ENCODE measurements at regions of chr21 and their contacts with region 1.

Region 1: GRCh38 chr21:39788383-39788782 is 43.4 kb downstream of the IGSF5 start:
- DNase-seq: no peak
- H3K4me3 ChIP-seq: no peak overlapping the region
- H3K27ac ChIP-seq: no peak overlapping the region
- H3K4me1 ChIP-seq: no peaks in the 10 kb centered on the region
- H3K27me3 ChIP-seq: no peaks in the 10 kb centered on the region
- CTCF ChIP-seq: peak; percentile 51 to 79 (median 72)
- POLR2A ChIP-seq: no peak

Region 2: GRCh38 chr21:38520511-38520910 is 1267.9 kb before region 1 on chr21:
- intact Hi-C with region 1: loop called (anchors 5 kb)
- DNase-seq: no peak
- H3K4me3 ChIP-seq: no peak overlapping the region
- H3K27ac ChIP-seq: no peak overlapping the region
- H3K4me1 ChIP-seq: no peaks in the 10 kb centered on the region
- H3K27me3 ChIP-seq: no peaks in the 10 kb centered on the region
- CTCF ChIP-seq: no peak
- POLR2A ChIP-seq: no peak

Region 3: DNA sequence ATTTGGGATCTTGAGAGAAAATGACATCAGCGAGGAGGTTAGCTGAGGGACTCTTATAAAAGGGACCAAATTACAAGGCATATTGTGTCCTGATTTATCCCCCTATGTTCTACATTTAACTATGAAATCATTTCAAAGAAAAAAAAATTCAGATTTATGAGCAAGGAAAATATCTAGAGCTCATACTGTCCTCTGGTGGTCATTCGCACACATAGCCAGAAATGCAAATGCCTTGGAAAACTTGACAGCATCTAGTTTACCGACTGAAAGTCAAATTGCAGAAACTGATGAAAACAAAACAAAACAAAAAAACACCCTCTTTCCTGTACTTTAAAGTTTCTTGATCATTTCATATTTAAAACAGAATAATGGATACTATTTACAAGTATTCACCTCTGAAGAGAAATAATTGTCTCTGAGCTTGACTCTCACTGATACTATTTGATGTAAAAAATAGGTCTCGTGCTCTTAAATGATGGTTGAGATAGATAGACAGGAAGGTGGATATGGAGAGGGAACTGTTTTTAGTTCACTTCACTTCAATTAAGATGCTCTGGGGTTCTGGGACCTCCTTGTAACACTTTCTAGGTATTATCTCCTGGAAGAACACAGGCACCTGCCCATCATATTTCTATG is 332.7 kb after region 1 on chr21:
- intact Hi-C with region 1: loop called (anchors 10 kb)
- DNase-seq: no peak
- H3K4me3 ChIP-seq: no peak overlapping the region
- H3K27ac ChIP-seq: no peak overlapping the region
- H3K4me1 ChIP-seq: no peaks in the 10 kb centered on the region
- H3K27me3 ChIP-seq: no peaks in the 10 kb centered on the region
- CTCF ChIP-seq: peak; percentile 46 to 85 (median 67)
- POLR2A ChIP-seq: no peak

Measured in vagina (tissue), 2 donors.